ENCODE measurements at regions of chr11 and their contacts with region 1.

Region 1: GRCh38 chr11:12102588-12103410 is 7.6 kb upstream of the MICAL2 start:
- H3K4me3 ChIP-seq: no peak overlapping the region
- H3K27ac ChIP-seq: no peak overlapping the region
- H3K4me1 ChIP-seq: no peaks in the 10 kb centered on the region
- CTCF ChIP-seq: no peak

Region 2: GRCh38 chr11:12087075-12088004 is 15.5 kb before region 1 on chr11:
- CTCF ChIA-PET with region 1: interaction called, 13 read pairs
- POLR2A ChIA-PET with region 1: interaction called, 3 read pairs
- H3K4me3 ChIP-seq: no peak overlapping the region
- H3K27ac ChIP-seq: no peak overlapping the region
- H3K4me1 ChIP-seq: no peaks in the 10 kb centered on the region
- CTCF ChIP-seq: no peak